MCF 10A (cell line): ENCODE measurements at regions of chr22 and their contacts with region 1.

Region 1: GRCh38 chr22:30005213-30005857 is 74.9 kb upstream of the HORMAD2 start:
- DNase-seq: peak; percentile 83
- H3K4me3 Mint-ChIP-seq: no peak overlapping the region
- H3K27ac Mint-ChIP-seq: no peak overlapping the region
- H3K4me1 Mint-ChIP-seq: no peaks in the 10 kb centered on the region
- H3K27me3 Mint-ChIP-seq: no peaks in the 10 kb centered on the region
- CTCF ChIP-seq: peak; percentile 92

Region 2: GRCh38 chr22:28154861-28155260 is 1850.5 kb before region 1 on chr22:
- CTCF ChIA-PET with region 1: no interaction called
- POLR2A ChIA-PET with region 1: no interaction called
- intact Hi-C with region 1: no loop called
- DNase-seq: no peak
- H3K4me3 Mint-ChIP-seq: no peak overlapping the region
- H3K27ac Mint-ChIP-seq: no peak overlapping the region
- H3K4me1 Mint-ChIP-seq: no peaks in the 10 kb centered on the region
- H3K27me3 Mint-ChIP-seq: peaks cover 24% of the 10 kb centered on the region
- CTCF ChIP-seq: no peak

Region 3: DNA sequence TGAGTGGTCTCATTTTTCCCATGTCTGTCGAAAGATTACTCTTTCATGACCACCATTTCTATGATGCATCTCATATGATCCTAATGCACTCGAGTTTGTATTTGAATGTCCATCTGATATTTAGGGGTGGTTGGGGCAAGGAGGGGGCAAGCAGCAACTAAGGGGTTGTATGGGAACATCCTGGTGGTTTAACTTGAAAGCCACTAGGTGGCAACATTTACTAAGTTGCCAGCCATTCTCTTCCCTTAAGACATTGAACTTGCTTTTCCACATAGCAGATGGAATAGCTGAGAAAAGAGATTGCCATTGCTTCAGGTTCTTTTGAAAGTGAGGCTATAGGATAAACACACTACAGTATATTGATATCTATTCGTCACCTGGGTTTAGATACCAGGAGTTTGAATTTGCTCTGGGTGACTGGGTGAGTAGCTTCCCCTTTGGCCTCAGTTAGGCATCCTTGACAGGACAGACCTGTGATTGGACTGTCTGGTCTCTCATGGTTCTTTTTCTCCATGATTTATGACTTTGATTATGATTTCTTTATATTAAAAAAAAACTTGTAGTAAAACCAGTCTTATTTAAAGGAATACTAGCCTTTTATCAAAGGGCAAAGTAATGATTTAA is 369.5 kb before region 1 on chr22:
- CTCF ChIA-PET with region 1: interaction called, 11 read pairs
- POLR2A ChIA-PET with region 1: interaction called, 3 read pairs
- intact Hi-C with region 1: loop called (anchors 2 kb)
- DNase-seq: peak; percentile 56
- H3K4me3 Mint-ChIP-seq: no peak overlapping the region
- H3K27ac Mint-ChIP-seq: no peak overlapping the region
- H3K4me1 Mint-ChIP-seq: peaks cover 12% of the 10 kb centered on the region
- H3K27me3 Mint-ChIP-seq: no peaks in the 10 kb centered on the region
- CTCF ChIP-seq: peak; percentile 57

Region 4: DNA sequence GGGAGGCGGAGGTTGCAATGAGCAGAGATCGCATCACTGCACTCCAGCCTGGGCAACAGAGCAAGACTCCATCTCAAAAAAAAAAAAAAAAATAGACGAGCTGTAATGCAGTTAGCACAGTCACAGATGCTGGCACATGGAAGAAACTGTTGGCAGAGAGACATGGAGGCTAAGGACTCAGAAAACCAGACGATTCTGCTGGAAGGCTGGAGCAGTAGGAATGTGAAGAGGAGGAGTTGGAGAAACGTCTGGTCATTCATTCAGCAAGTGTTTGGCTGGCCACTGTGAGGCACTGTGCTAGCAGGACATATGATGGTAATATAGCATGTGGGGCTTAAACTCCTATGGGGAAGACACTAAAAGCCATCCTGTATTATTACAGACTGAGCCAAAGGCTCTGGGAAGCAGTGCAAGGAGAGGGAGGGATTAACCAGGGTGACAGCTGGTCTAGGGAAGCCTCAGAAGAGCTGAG is 233.1 kb before region 1 on chr22:
- CTCF ChIA-PET with region 1: interaction called, 28 read pairs
- POLR2A ChIA-PET with region 1: no interaction called
- intact Hi-C with region 1: loop called (anchors 1 kb)
- DNase-seq: peak; percentile 55
- H3K4me3 Mint-ChIP-seq: no peak overlapping the region
- H3K27ac Mint-ChIP-seq: peak overlapping the region; percentile 68
- H3K4me1 Mint-ChIP-seq: peaks cover 13% of the 10 kb centered on the region
- H3K27me3 Mint-ChIP-seq: no peaks in the 10 kb centered on the region
- CTCF ChIP-seq: peak; percentile 34

Region 5: DNA sequence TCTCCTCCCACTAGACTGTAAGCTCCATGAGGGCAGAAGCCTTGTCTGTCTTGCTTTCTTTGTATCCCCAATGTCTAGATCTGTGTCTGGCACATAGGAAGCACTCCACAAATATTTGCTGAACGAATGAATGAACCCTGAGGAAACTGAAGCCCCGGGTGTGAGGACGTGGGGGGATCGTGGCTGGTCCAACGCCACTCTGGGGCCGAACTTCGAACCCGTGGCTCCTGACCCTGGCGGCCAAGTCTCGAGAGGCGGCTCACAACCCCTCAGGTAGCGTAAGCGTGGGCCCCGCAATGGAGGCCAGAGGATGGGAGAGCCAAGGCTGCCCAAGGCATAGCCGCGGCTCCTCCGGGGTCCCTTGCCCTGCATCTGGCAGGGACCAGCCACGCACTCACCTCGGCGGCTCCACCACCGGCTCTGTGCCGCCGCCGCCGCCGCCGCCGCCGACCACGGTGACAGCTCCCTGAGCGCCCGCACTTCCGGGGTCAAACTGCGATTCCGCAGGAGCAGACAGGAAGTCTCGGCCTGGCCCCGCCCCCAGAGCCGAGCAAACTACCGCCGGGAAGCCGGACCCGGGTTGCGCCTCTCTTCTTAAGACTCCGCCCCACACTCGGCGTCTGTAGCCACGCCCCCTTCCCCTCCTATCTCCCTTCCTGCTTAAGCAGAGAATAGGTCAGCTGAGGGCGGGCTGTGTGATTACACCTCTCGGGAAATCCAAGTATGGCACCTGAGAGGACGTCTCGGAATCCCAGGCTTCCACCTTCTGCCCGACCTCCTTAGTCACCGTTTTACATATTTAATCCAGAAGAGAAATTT is 167.3 kb before region 1 on chr22 and contains the start of gene ASCC2:
- CTCF ChIA-PET with region 1: interaction called, 12 read pairs
- POLR2A ChIA-PET with region 1: interaction called, 7 read pairs
- intact Hi-C with region 1: no loop called
- DNase-seq: peak; percentile 98
- H3K4me3 Mint-ChIP-seq: peak within 1 kb of the TSS; percentile 93
- H3K27ac Mint-ChIP-seq: peak within 1 kb of the TSS; percentile 91
- H3K4me1 Mint-ChIP-seq: peaks cover 25% of the 10 kb centered on the region
- H3K27me3 Mint-ChIP-seq: no peaks in the 10 kb centered on the region
- CTCF ChIP-seq: no peak
- total RNA-seq, gene ASCC2: 63.2 and 70.7 TPM in 2 replicates

Region 6: GRCh38 chr22:30021881-30022619 is 16.7 kb after region 1 on chr22:
- CTCF ChIA-PET with region 1: interaction called, 13 read pairs
- POLR2A ChIA-PET with region 1: interaction called, 3 read pairs
- intact Hi-C with region 1: no loop called
- DNase-seq: no peak
- H3K4me3 Mint-ChIP-seq: no peak overlapping the region
- H3K27ac Mint-ChIP-seq: peak overlapping the region; percentile 46
- H3K4me1 Mint-ChIP-seq: peaks cover 5% of the 10 kb centered on the region
- H3K27me3 Mint-ChIP-seq: no peaks in the 10 kb centered on the region
- CTCF ChIP-seq: no peak

Region 7: GRCh38 chr22:30556388-30556787 is 551.1 kb after region 1 on chr22:
- CTCF ChIA-PET with region 1: no interaction called
- POLR2A ChIA-PET with region 1: no interaction called
- intact Hi-C with region 1: no loop called
- DNase-seq: no peak
- H3K4me3 Mint-ChIP-seq: no peak overlapping the region
- H3K27ac Mint-ChIP-seq: no peak overlapping the region
- H3K4me1 Mint-ChIP-seq: no peaks in the 10 kb centered on the region
- H3K27me3 Mint-ChIP-seq: no peaks in the 10 kb centered on the region
- CTCF ChIP-seq: no peak